ENCODE measurements at regions of chr18 and their contacts with region 1.

Region 1: GRCh38 chr18:11733031-11733430 is 44.0 kb downstream of the GNAL start:
- DNase-seq: peak; percentile 15
- H3K4me3 ChIP-seq: peak overlapping the region; percentile 43
- H3K27ac ChIP-seq: no peak overlapping the region
- H3K27me3 ChIP-seq: peaks cover 19% of the 10 kb centered on the region
- CTCF ChIP-seq: peak; percentile 90

Region 2: DNA sequence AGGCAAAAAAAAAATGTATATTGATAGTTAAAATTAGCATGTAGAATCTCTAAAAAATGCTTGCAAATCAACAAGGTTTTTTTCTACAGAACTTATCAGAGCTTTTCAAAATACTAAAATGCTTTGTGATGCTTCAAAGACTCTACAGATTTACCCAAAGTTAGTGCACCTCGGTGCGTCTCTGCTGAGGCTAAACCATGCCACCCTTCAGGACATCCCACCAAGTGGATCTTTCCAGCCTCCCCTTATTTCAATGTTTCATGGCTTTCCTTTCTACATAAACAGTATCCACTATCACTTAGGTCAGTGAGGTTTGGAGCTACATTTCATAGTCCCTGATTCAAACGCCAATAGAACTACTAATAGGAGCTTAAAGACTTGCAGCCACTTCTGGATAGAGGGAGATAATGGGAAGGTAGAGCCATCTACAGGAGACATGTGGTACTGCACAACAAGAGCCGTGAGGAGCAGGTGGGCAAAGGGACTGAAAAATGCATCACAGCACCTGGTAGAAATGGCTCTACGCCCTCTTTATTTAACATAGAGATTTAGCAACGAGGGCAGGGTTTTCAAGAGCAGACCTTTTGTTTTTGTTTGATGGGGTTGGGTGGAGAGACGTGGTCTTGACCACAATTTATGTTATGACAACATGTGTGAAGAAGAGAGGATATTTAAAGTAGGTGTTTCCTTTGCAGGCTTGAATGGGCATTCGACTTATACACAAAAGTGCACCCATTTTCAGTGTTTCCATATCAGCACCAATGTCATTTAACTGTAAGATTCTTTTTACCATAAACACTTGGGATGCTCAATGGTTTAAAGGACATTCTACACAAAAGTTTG is 179.7 kb before region 1 on chr18:
- CTCF ChIA-PET with region 1: no interaction called
- POLR2A ChIA-PET with region 1: no interaction called
- DNase-seq: peak; percentile 23
- H3K4me3 ChIP-seq: no peak overlapping the region
- H3K27ac ChIP-seq: no peak overlapping the region
- H3K27me3 ChIP-seq: peaks cover 8% of the 10 kb centered on the region
- CTCF ChIP-seq: peak; percentile 97

Region 3: DNA sequence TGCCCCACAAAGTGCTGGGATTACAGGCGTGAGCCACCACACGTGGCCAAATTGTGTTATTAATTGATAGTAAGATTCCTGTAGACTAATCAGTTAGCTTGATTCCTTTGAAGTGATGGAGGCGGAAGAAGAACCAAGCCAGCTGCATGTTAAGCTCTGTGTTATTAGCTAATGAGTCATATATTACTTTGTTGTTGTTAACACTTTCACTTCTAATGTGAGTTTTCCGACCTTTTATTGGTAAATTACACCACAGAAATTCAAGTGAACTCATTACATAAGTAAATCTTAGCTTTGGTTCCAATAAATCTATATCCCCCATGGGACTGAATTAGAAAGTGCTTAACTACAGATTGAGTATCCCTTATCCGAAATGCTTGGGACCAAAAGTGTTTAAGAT is 138.5 kb after region 1 on chr18:
- CTCF ChIA-PET with region 1: interaction called, 10 read pairs
- POLR2A ChIA-PET with region 1: no interaction called
- DNase-seq: no peak
- H3K4me3 ChIP-seq: no peak overlapping the region
- H3K27ac ChIP-seq: no peak overlapping the region
- H3K27me3 ChIP-seq: no peaks in the 10 kb centered on the region
- CTCF ChIP-seq: no peak

Region 4: GRCh38 chr18:11932393-11932792 is 199.4 kb after region 1 on chr18:
- CTCF ChIA-PET with region 1: interaction called, 19 read pairs
- POLR2A ChIA-PET with region 1: no interaction called
- DNase-seq: no peak
- H3K4me3 ChIP-seq: no peak overlapping the region
- H3K27ac ChIP-seq: no peak overlapping the region
- H3K27me3 ChIP-seq: peaks cover 3% of the 10 kb centered on the region
- CTCF ChIP-seq: no peak